Aorta (tissue), 5 donors: ENCODE measurements at regions of chr11 and their contacts with region 1.

Region 1: GRCh38 chr11:84714316-84714780 is 912.8 kb downstream of the DLG2 start:
- DNase-seq: peak in 1 of 2 donors; percentile 61
- ATAC-seq: peak; percentile 67
- H3K4me3 ChIP-seq: no peak overlapping the region
- H3K27ac ChIP-seq: no peak overlapping the region
- H3K4me1 ChIP-seq: no peaks in the 10 kb centered on the region
- H3K27me3 ChIP-seq: no peaks in the 10 kb centered on the region

Region 2: DNA sequence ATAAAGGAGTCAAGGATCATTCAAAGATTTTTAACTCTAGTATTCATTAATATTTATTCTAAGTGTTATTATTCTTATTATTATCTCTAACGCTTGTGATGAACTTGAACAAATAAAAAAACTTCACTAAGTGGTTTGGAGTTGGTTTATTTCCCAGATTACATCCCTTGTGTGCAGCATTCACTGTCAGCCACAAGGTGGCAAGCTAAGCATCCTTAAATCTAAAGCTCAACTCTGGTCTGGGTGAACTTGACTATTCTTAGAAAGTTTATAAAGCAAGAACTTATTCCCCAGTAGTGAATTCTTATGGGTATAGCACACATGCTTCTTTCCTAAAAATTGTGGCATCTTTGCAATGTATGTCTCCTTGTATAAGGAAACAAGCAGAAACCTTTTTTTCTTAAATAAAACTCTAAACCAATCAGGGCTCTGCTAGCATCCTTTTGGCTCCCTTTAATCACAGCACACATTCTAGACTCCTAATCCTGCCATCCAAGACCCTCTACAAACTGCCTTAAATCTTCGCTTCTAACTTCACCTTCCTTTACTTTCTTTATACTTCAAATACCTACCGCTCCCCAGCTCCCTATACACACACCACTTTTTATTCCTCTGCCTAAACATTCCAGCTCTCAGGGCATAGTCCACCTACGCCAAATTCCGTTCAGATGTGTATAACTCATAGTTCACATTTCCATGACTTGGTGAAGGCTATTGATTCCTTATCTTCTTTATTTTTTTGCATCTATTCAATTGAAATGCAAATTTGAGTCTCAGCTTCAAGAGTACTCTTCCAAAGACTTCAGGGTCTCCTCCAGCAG is 156.1 kb before region 1 on chr11:
- intact Hi-C with region 1: loop called (anchors 10 kb)
- DNase-seq: no peak
- ATAC-seq: peak; percentile 68
- H3K4me3 ChIP-seq: no peak overlapping the region
- H3K27ac ChIP-seq: no peak overlapping the region
- H3K4me1 ChIP-seq: no peaks in the 10 kb centered on the region
- H3K27me3 ChIP-seq: no peaks in the 10 kb centered on the region